ENCODE measurements at regions of chr7 and their contacts with region 1.

Region 1: GRCh38 chr7:100469227-100470044 is 5.4 kb upstream of the SPACDR start:
- DNase-seq: peak; percentile 88 to 94 (median 91)
- ATAC-seq: peak; percentile 76
- H3K4me3 ChIP-seq: no peak overlapping the region
- H3K27ac ChIP-seq: peak overlapping the region in 3 of 4 donors; percentile 27 to 66 (median 60)
- H3K4me1 ChIP-seq: peaks cover 49% of the 10 kb centered on the region
- H3K27me3 ChIP-seq: no peaks in the 10 kb centered on the region
- CTCF ChIP-seq: peak; percentile 90 to 99 (median 96)
- POLR2A ChIP-seq: no peak

Region 2: DNA sequence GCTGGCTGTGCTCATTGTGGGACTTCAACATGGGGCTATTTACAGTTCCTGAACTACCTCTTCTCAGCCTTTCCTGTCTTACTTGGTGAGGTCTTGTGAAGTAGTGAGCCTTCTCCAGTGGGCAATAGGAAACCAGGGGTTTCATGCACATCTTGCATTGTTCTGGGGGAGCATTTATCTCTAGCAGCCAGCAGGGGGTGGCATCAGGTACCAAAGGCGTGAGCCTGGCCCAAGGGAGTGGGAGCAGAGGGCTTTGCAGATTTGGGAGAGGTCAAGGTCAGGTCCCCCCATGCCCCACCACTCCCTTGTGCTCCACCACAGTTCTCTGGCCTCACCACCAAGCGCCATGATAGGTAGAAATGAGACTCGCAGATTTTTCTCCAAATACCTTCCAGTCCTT is 1937.7 kb before region 1 on chr7:
- intact Hi-C with region 1: no loop called
- DNase-seq: no peak
- ATAC-seq: no peak
- H3K4me3 ChIP-seq: no peak overlapping the region
- H3K27ac ChIP-seq: no peak overlapping the region
- H3K4me1 ChIP-seq: no peaks in the 10 kb centered on the region
- H3K27me3 ChIP-seq: no peaks in the 10 kb centered on the region
- CTCF ChIP-seq: no peak
- POLR2A ChIP-seq: no peak

Region 3: DNA sequence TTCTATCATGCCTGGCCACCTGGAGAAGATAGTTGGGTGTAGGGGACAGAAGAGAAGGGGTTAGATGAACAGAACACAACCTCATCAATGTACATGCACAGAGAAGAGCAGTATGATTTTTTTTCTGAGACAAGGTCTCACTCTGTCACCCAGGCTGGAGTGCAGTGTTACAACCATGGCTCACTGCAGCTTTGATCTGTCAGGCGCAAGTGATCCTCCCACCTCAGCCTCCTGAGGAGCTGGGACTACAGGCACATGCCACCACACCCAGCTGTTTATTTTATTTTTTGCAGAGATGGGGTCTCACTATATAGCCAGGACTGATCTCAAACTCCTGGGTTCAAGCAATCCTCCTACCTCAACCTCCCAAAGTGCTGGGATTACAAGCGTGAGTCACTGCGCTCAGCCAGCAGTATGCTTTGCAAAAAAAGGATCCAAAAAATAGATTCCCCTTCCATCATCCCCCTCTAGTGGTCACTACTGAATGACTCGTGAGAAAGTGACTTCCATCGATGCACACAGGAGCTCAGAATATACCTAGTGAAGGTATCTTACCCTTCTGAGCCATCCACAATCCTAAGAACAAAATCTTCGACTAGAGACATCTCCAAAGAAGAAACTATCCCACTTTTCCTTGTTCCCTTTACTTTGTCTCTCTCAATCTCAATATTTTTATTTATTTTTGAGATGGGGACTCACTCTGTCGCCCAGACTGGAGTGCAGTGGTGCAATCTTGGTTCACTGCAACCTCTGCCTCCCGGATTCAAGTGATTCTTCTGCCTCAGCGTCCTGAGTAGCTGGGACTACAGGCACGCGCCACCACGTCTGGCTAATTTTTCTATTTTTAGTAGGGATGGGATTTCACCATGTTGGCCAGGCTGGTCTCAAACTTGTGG is 61.9 kb before region 1 on chr7:
- intact Hi-C with region 1: no loop called
- DNase-seq: peak in 3 of 4 donors; percentile 19 to 60 (median 33)
- ATAC-seq: peak; percentile 76
- H3K4me3 ChIP-seq: no peak overlapping the region
- H3K27ac ChIP-seq: no peak overlapping the region
- H3K4me1 ChIP-seq: no peaks in the 10 kb centered on the region
- H3K27me3 ChIP-seq: no peaks in the 10 kb centered on the region
- CTCF ChIP-seq: peak; percentile 38 to 68 (median 49)
- POLR2A ChIP-seq: no peak

Region 4: DNA sequence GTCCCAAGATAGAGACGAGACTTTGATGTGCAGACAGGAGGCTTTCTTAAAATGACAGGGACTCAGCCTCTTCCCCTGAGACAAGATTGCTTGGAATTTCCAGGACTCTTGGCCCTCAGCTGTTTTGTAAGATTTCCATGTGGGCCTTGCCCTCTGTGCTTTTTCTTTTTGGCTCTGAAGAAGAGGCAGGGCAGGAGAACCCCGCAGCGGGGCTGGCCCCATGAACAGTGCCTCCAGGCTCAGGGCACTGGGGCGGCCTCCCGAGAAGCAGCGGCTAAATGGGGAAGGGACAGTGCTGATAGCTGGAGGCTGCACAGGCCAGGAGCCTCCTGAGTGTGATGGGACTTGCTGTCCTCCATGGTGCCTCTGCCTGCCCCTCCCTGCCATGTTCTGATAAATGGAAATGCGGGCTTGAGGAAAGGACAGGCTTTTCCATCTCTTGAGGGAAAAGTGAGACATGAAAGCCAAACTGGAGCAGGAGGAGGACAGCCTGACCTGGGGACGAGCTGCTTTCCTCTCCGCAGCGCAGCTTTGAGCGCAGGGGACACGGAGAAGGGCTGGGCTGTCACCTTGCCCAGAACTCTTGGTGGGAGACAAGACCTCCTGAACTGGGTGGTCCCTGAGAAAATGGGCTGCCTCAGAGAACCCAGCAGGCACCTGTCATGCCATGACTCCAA is 92.2 kb after region 1 on chr7:
- intact Hi-C with region 1: loop called (anchors 2 kb)
- DNase-seq: no peak
- ATAC-seq: no peak
- H3K4me3 ChIP-seq: no peak overlapping the region
- H3K27ac ChIP-seq: no peak overlapping the region
- H3K4me1 ChIP-seq: peaks cover 23% of the 10 kb centered on the region
- H3K27me3 ChIP-seq: no peaks in the 10 kb centered on the region
- CTCF ChIP-seq: no peak
- POLR2A ChIP-seq: no peak